Calu3 (cell line): ENCODE measurements at regions of chr4 and their contacts with region 1.

Region 1: GRCh38 chr4:27096142-27096824 is 235.6 kb downstream of the STIM2 start:
- DNase-seq: no peak
- H3K4me3 Mint-ChIP-seq: no peak overlapping the region
- H3K27ac Mint-ChIP-seq: no peak overlapping the region
- H3K4me1 Mint-ChIP-seq: peaks cover 31% of the 10 kb centered on the region
- H3K27me3 Mint-ChIP-seq: no peaks in the 10 kb centered on the region
- CTCF ChIP-seq: no peak

Region 2: GRCh38 chr4:26839534-26839951 is 256.7 kb before region 1 on chr4:
- CTCF ChIA-PET with region 1: no interaction called
- intact Hi-C with region 1: no loop called
- DNase-seq: no peak
- H3K4me3 Mint-ChIP-seq: no peak overlapping the region
- H3K27ac Mint-ChIP-seq: no peak overlapping the region
- H3K4me1 Mint-ChIP-seq: no peaks in the 10 kb centered on the region
- H3K27me3 Mint-ChIP-seq: no peaks in the 10 kb centered on the region
- CTCF ChIP-seq: no peak

Region 3: GRCh38 chr4:27048429-27049238 is 47.6 kb before region 1 on chr4:
- CTCF ChIA-PET with region 1: no interaction called
- intact Hi-C with region 1: loop called (anchors 5 kb)
- DNase-seq: no peak
- H3K4me3 Mint-ChIP-seq: peak overlapping the region; percentile 26
- H3K27ac Mint-ChIP-seq: no peak overlapping the region
- H3K4me1 Mint-ChIP-seq: peaks cover under 1% of the 10 kb centered on the region
- H3K27me3 Mint-ChIP-seq: no peaks in the 10 kb centered on the region
- CTCF ChIP-seq: peak; percentile 35

Region 4: GRCh38 chr4:27123123-27123768 is 27.0 kb after region 1 on chr4:
- CTCF ChIA-PET with region 1: interaction called, 5 read pairs
- intact Hi-C with region 1: loop called (anchors 2 kb)
- DNase-seq: peak; percentile 34
- H3K4me3 Mint-ChIP-seq: peak overlapping the region; percentile 10
- H3K27ac Mint-ChIP-seq: peak overlapping the region; percentile 85
- H3K4me1 Mint-ChIP-seq: peaks cover 48% of the 10 kb centered on the region
- H3K27me3 Mint-ChIP-seq: no peaks in the 10 kb centered on the region
- CTCF ChIP-seq: no peak

Region 5: GRCh38 chr4:27149541-27150212 is 53.4 kb after region 1 on chr4:
- CTCF ChIA-PET with region 1: no interaction called
- intact Hi-C with region 1: loop called (anchors 2 kb)
- DNase-seq: no peak
- H3K4me3 Mint-ChIP-seq: no peak overlapping the region
- H3K27ac Mint-ChIP-seq: no peak overlapping the region
- H3K4me1 Mint-ChIP-seq: no peaks in the 10 kb centered on the region
- H3K27me3 Mint-ChIP-seq: no peaks in the 10 kb centered on the region
- CTCF ChIP-seq: no peak

Region 6: GRCh38 chr4:27176400-27176799 is 80.1 kb after region 1 on chr4:
- CTCF ChIA-PET with region 1: no interaction called
- intact Hi-C with region 1: loop called (anchors 1 kb)
- DNase-seq: peak; percentile 53
- H3K4me3 Mint-ChIP-seq: no peak overlapping the region
- H3K27ac Mint-ChIP-seq: no peak overlapping the region
- H3K4me1 Mint-ChIP-seq: peaks cover 15% of the 10 kb centered on the region
- H3K27me3 Mint-ChIP-seq: no peaks in the 10 kb centered on the region
- CTCF ChIP-seq: no peak

Region 7: DNA sequence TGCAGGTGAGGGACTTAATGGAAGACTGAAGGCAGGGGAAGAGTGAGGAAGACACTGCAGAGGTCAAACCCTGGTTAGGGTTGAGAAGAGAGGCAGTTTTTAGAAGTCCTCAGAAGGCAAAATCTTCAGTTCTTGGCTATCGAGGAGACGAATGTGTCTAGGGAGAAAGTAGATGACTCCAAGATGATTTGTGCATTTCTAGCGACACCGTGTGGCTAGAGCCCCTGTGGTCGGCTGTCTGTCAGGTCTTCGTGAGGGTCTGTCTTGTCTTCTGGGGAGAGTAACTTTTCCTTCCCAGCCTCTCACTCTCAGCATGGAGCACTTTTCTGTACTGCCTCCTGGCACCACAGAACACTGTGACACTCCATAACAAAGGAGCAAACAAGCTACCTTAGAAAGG is 222.5 kb after region 1 on chr4:
- CTCF ChIA-PET with region 1: no interaction called
- intact Hi-C with region 1: loop called (anchors 2 kb)
- DNase-seq: peak; percentile 55
- H3K4me3 Mint-ChIP-seq: no peak overlapping the region
- H3K27ac Mint-ChIP-seq: peak overlapping the region; percentile 44
- H3K4me1 Mint-ChIP-seq: peaks cover 24% of the 10 kb centered on the region
- H3K27me3 Mint-ChIP-seq: no peaks in the 10 kb centered on the region
- CTCF ChIP-seq: no peak